AG04449 (cell line): ENCODE measurements at regions of chr19 and their contacts with region 1.

Region 1: GRCh38 chr19:42762782-42763181 is 2.7 kb downstream of the PSG8 start:
- DNase-seq: no peak
- H3K4me3 ChIP-seq: no peak overlapping the region
- CTCF ChIP-seq: no peak

Region 2: DNA sequence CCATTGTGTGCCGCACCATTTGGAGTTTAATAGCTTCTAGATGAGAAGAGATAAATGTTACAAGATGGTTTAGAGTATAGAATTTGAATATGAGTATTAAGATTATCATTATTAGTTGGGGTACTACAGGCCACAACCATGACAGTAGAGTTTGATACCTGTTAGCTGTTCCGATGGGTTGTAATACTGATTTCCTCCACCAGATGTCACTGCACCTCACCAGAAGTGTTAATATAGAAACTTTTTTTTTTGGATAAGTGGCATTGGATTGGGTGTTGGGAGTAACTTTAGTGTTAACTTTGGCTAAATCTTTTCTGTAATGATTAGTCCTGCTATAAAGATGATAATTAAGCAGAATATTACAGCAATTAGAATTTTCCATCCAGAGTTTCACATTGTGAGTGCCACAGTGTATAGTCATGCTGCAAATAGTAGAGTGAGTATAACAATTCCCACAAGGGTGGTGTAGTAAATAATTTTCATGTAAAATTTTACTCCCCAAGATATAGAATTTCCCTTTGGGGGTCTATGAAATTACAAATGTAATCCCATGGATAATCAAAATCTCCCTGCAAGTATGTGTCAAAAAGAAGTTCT is 78.8 kb before region 1 on chr19:
- CTCF ChIA-PET with region 1: interaction called, 11 read pairs
- POLR2A ChIA-PET with region 1: no interaction called
- DNase-seq: no peak
- H3K4me3 ChIP-seq: no peak overlapping the region
- CTCF ChIP-seq: peak; percentile 46

Region 3: DNA sequence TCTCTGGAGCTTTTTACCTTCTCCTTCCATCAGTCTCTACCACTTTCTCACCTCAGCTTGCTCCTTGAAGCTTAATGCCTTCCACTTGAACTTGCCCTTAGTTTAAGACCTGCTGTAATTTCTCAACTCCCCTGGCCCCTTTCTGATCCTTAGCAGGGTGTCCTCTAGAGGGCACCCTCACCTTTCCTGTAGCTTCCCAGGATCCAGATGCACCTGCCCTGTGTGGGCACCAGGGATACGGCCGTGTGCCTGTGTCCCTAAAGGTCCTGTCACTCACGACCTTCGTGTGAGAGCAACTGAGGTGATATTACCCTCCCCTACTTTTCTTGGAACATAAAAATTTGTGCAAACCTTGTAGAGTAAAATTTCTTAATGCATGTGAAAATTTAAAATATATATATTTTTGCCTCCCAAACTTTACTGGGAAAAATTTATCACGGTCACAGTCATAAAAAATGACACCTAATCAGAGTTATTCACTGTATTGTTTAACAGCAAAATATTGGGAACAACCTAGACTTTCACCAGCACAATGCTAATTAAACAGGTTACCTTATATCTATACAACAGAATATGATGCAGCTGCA is 68.9 kb before region 1 on chr19:
- CTCF ChIA-PET with region 1: interaction called, 21 read pairs
- POLR2A ChIA-PET with region 1: no interaction called
- DNase-seq: no peak
- H3K4me3 ChIP-seq: no peak overlapping the region
- CTCF ChIP-seq: peak; percentile 77

Region 4: DNA sequence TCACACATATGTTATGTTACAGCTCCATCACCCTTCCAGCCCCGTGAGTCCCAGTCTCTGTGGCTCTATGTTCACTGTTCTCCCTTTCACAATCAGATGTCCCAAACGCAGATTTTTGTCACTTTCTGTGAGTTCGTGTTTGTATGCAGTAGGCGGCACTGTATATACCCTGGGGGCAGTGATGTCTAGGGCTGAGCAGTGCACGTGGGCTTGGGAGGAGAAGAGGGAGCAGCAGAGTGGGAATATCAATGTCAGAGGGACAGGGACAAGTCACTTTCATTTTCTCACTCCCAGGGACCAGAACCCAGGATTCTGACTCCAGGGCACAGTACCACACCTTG is 94.7 kb after region 1 on chr19:
- CTCF ChIA-PET with region 1: no interaction called
- POLR2A ChIA-PET with region 1: no interaction called
- DNase-seq: no peak
- H3K4me3 ChIP-seq: no peak overlapping the region
- CTCF ChIP-seq: no peak